Activated B cell treated with CpG ODN at 0.5 μM for 24 hours (primary cell): ENCODE measurements at regions of chr4 and their contacts with region 1.

Region 1: GRCh38 chr4:39942507-39942906 is 35.2 kb downstream of the PDS5A start:
- DNase-seq: no peak
- ATAC-seq: peak; percentile 57
- H3K4me3 Mint-ChIP-seq: peak overlapping the region; percentile 36
- H3K27ac Mint-ChIP-seq: peak overlapping the region; percentile 70
- H3K4me1 Mint-ChIP-seq: peaks cover 71% of the 10 kb centered on the region
- H3K27me3 Mint-ChIP-seq: no peaks in the 10 kb centered on the region
- CTCF ChIP-seq: no peak

Region 2: GRCh38 chr4:38123555-38123954 is 1819.0 kb before region 1 on chr4:
- CTCF ChIA-PET with region 1: no interaction called
- POLR2A ChIA-PET with region 1: interaction called, 10 read pairs
- intact Hi-C with region 1: no loop called
- DNase-seq: no peak
- ATAC-seq: no peak
- H3K4me3 Mint-ChIP-seq: no peak overlapping the region
- H3K27ac Mint-ChIP-seq: no peak overlapping the region
- H3K4me1 Mint-ChIP-seq: peaks cover 9% of the 10 kb centered on the region
- H3K27me3 Mint-ChIP-seq: no peaks in the 10 kb centered on the region
- CTCF ChIP-seq: no peak

Region 3: DNA sequence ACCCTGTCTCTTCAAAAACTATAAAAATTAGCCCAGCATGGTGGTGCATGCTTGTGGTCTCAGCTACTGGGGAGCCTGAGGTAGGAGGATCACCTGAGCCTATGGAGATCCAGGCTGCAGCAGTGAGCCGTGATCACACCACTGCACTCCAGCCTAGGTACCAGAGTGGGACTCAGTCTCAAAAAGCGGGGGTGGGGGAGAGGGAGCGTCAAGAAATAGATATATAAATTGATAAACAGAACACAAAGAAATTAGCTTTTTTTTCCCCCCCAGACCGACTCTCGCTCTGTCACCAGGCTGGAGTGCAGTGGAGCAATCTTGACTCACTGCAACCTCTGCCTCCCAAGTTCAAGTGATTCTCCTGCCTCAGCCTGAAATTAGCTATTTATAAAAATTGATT is 21.1 kb after region 1 on chr4:
- CTCF ChIA-PET with region 1: no interaction called
- POLR2A ChIA-PET with region 1: interaction called, 4 read pairs
- intact Hi-C with region 1: loop called (anchors 2 kb)
- DNase-seq: no peak
- ATAC-seq: no peak
- H3K4me3 Mint-ChIP-seq: no peak overlapping the region
- H3K27ac Mint-ChIP-seq: peak overlapping the region; percentile 46
- H3K4me1 Mint-ChIP-seq: peaks cover 51% of the 10 kb centered on the region
- H3K27me3 Mint-ChIP-seq: no peaks in the 10 kb centered on the region
- CTCF ChIP-seq: no peak